ENCODE measurements at regions of chr3 and their contacts with region 1.

Region 1: DNA sequence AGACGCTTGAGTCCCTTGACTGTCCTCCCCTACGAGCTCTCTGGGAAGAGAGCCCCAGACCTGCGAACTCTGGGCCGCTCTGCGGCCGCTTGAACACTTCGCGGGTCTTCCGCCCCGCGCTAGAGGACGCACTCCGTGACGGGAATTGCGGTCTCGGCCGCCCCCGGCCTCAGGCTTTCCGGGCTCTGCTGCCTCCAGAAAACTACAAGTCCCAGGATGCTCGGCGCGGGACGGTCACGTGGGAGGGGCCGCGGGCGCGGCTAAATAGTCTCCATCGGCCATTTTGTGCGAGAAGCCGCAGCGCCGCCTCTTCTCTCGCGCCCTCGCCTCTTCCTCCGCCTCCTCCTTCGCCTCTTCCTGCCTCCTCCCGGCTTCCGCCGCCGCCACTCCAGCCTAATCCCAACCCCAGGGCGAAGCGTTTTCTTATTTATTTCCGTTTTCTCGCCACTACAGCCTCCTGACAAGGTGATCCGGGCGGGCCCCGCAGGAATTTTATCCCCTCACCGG is at the start of gene EIF1B:
- DNase-seq: peak; percentile 99
- ATAC-seq: peak; percentile 88
- H3K4me3 Mint-ChIP-seq: peak within 1 kb of the TSS; percentile 99
- H3K27ac Mint-ChIP-seq: peak within 1 kb of the TSS; percentile 99
- H3K4me1 Mint-ChIP-seq: peaks cover 35% of the 10 kb centered on the region
- H3K27me3 Mint-ChIP-seq: no peaks in the 10 kb centered on the region
- CTCF ChIP-seq: no peak
- total RNA-seq, gene EIF1B: 62.0 and 65.5 TPM in 2 replicates

Region 2: GRCh38 chr3:39180546-39181346 is 1128.7 kb before region 1 on chr3:
- CTCF ChIA-PET with region 1: no interaction called
- POLR2A ChIA-PET with region 1: no interaction called
- intact Hi-C with region 1: loop called (anchors 5 kb)
- DNase-seq: peak; percentile 88
- ATAC-seq: peak; percentile 89
- H3K4me3 Mint-ChIP-seq: peak overlapping the region; percentile 73
- H3K27ac Mint-ChIP-seq: peak overlapping the region; percentile 77
- H3K4me1 Mint-ChIP-seq: peaks cover 31% of the 10 kb centered on the region
- H3K27me3 Mint-ChIP-seq: no peaks in the 10 kb centered on the region
- CTCF ChIP-seq: no peak

Region 3: DNA sequence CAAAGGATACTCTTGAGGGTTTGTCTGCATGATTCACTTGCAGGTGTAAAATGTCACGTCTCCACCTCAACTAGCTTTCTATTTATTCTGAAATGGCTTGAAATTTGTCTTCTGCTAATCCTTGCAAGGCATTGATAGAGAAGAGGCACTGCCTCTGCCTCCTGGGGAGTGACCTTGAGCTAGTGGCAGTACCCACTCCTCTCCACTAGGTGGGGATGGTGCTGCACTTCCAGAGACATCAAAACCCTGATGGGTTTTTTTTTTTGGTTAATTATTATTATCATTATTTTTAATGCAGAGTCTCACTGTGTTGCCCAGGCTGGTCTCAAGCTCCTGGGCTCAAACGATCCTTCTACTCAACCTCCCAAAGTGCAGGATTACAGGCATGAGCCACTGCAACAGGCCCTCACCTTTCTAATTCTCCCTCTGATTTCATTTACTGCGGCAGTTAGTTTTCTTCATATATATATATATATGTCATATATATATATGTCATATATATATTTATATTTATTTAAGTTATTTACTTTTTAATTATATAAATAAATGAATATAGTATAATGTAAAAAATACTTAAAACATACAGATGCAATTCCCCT is 117.5 kb before region 1 on chr3:
- CTCF ChIA-PET with region 1: interaction called, 84 read pairs
- POLR2A ChIA-PET with region 1: interaction called, 4 read pairs
- intact Hi-C with region 1: loop called (anchors 2 kb)
- DNase-seq: peak; percentile 26
- ATAC-seq: peak; percentile 82
- H3K4me3 Mint-ChIP-seq: no peak overlapping the region
- H3K27ac Mint-ChIP-seq: no peak overlapping the region
- H3K4me1 Mint-ChIP-seq: no peaks in the 10 kb centered on the region
- H3K27me3 Mint-ChIP-seq: no peaks in the 10 kb centered on the region
- CTCF ChIP-seq: peak; percentile 60

Region 4: GRCh38 chr3:40476478-40477470 is 167.3 kb after region 1 on chr3 and contains the start of gene ZNF619:
- CTCF ChIA-PET with region 1: no interaction called
- POLR2A ChIA-PET with region 1: interaction called, 3 read pairs
- intact Hi-C with region 1: loop called (anchors 1 kb)
- DNase-seq: peak; percentile 64
- ATAC-seq: peak; percentile 97
- H3K4me3 Mint-ChIP-seq: peak within 1 kb of the TSS; percentile 93
- H3K27ac Mint-ChIP-seq: peak within 1 kb of the TSS; percentile 94
- H3K4me1 Mint-ChIP-seq: peaks cover 27% of the 10 kb centered on the region
- H3K27me3 Mint-ChIP-seq: no peaks in the 10 kb centered on the region
- CTCF ChIP-seq: no peak
- total RNA-seq, gene ZNF619: 14.9 and 16.7 TPM in 2 replicates

Region 5: DNA sequence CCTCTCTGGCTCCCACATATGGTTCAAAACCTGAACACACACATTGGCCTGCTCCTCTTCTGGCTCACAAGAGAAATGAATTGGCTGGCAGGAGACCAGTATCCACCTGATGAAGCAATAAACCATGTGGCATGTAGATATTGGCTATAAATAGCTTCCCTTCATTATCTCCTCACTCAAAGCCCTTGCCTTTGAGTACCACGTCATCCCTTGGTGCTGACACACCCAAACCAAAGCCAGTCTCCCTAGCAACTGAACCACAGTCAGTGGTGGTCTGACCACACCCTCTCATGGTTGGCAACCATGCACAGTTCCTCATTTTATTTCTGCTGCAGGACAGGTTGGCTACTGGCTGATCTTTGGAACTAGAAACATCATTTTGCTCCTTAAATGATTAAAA is 314.1 kb after region 1 on chr3:
- CTCF ChIA-PET with region 1: no interaction called
- POLR2A ChIA-PET with region 1: no interaction called
- intact Hi-C with region 1: loop called (anchors 1 kb)
- DNase-seq: peak; percentile 65
- ATAC-seq: peak; percentile 92
- H3K4me3 Mint-ChIP-seq: no peak overlapping the region
- H3K27ac Mint-ChIP-seq: no peak overlapping the region
- H3K4me1 Mint-ChIP-seq: peaks cover 13% of the 10 kb centered on the region
- H3K27me3 Mint-ChIP-seq: no peaks in the 10 kb centered on the region
- CTCF ChIP-seq: no peak